Activated CD8-positive, alpha-beta memory T cell treated with anti-CD3 and anti-CD28 coated beads, Interleukin-2, amount 10 ng/mL, durations not matched to agents 7 days and 5 days (primary cell): ENCODE measurements at regions of chr9 and their contacts with region 1.

Region 1: GRCh38 chr9:35903049-35903448 is 3.0 kb upstream of the HRCT1 start:
- DNase-seq: peak; percentile 53
- ATAC-seq: peak; percentile 60
- H3K4me3 Mint-ChIP-seq: no peak overlapping the region
- H3K27ac Mint-ChIP-seq: no peak overlapping the region
- H3K4me1 Mint-ChIP-seq: peaks cover 2% of the 10 kb centered on the region
- H3K27me3 Mint-ChIP-seq: peaks cover 23% of the 10 kb centered on the region

Region 2: GRCh38 chr9:35812025-35812602 is 90.9 kb before region 1 on chr9 and contains the start of gene SPAG8:
- CTCF ChIA-PET with region 1: no interaction called
- DNase-seq: peak; percentile 99
- ATAC-seq: peak; percentile 69
- H3K4me3 Mint-ChIP-seq: peak within 1 kb of the TSS; percentile 75
- H3K27ac Mint-ChIP-seq: peak within 1 kb of the TSS; percentile 95
- H3K4me1 Mint-ChIP-seq: peaks cover 44% of the 10 kb centered on the region
- H3K27me3 Mint-ChIP-seq: peaks cover 2% of the 10 kb centered on the region
- total RNA-seq, gene SPAG8: 1.2 to 1.4 TPM

Region 3: DNA sequence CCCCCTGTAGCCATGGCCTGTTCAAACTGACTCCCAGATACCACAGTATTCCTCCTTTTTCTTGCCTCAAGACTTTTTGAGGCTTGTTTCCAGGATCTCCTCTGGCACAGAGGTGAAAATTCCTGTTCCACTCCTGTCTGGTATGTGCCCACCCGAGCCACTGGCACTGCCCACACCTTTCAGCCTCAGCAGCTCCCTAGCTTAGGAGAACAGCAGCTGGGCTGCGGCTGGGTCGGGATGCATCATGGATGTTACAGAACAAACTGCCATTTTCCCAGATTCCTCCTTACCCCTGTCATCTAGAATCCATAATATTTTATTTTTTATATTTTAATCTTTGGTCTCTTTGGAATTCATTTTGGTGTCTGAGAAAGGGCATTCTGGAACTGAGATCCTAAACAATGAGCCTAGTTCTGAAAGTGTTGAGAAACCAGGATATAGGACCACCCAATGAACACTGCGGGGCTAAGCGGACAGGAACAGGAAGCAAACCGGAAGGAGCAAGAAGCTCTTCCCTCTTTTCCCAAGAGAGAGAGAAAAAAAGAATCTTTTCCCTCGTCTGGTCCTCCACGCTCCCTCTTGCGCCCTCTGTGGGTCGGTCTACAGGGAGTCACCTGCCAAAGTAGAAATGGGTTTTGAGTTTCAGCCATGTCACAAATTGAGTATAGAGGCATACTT is 42.4 kb after region 1 on chr9:
- CTCF ChIA-PET with region 1: interaction called, 32 read pairs
- DNase-seq: peak; percentile 69
- ATAC-seq: peak; percentile 49
- H3K4me3 Mint-ChIP-seq: no peak overlapping the region
- H3K27ac Mint-ChIP-seq: no peak overlapping the region
- H3K4me1 Mint-ChIP-seq: peaks cover 9% of the 10 kb centered on the region
- H3K27me3 Mint-ChIP-seq: peaks cover 3% of the 10 kb centered on the region

Region 4: DNA sequence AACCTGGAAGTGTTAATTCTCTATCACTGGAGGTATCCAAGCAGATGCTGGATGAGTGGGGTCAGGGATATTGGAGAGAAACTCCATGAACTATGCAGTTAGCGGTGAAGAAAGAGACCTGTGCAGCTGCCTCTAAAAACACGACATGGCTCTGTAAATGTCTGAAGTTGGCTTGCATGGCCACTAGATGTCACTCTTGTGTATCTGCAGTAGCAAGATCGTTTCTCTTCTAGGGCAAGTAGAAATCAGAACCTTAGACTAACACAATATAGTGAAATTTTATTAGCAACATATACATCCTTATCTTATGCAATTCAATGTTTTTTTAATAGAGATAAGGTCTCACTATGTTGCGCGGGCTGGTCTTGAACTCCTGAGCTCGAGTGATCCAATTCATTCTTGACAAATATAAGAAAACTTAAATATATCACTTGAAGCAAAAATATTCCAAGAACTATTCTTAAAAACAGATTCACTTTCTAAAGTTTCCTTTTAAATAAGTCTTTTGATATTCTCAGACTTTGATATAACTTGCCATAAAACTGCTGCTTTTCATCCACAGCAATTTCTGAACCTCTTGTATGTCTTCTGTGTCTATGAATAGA is 52.0 kb after region 1 on chr9:
- CTCF ChIA-PET with region 1: interaction called, 10 read pairs
- DNase-seq: peak; percentile 68
- ATAC-seq: peak; percentile 68
- H3K4me3 Mint-ChIP-seq: no peak overlapping the region
- H3K27ac Mint-ChIP-seq: no peak overlapping the region
- H3K4me1 Mint-ChIP-seq: no peaks in the 10 kb centered on the region
- H3K27me3 Mint-ChIP-seq: peaks cover 48% of the 10 kb centered on the region